ENCODE measurements at regions of chr2 and their contacts with region 1.

Region 1: DNA sequence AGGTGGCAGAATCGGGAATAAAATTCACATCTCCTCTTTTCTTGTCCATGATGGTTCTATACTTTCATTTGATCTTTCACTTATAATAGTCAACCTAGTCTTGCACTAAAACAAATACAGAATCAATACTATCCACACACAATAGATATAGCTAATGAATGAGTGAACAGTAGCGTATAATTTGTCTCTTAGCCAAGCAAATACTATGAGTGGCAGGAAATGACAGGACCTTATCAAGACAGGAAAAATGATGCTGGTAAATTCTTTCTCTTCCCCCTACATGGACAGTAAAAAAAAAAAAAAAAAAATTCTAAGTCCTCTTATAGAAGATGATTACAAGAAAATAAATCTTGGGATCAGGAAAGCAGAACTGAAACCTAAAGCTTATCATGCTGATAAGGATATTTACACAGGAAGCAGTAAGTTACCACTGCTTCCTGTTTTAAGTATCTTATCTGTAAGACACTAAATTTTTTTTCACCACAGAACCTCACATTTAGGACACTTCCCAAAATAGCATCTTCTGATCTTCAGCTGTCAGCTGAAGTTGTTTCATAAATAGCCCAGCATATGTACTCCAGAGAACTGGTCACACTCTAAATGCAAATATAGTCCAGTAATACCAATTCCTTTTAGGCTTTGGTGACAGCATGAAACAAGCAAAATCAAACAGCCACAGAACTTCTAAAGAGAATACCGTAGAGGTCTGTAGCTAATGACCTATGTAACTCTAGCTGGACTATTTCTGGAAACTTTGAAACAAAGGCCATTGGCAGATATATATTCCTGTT is 27.0 kb downstream of the IRS1 start:
- DNase-seq: no peak
- ATAC-seq: peak; percentile 83
- H3K4me3 Mint-ChIP-seq: peak overlapping the region; percentile 76
- H3K27ac Mint-ChIP-seq: peak overlapping the region; percentile 78
- H3K4me1 Mint-ChIP-seq: peaks cover 29% of the 10 kb centered on the region
- H3K27me3 Mint-ChIP-seq: no peaks in the 10 kb centered on the region

Region 2: DNA sequence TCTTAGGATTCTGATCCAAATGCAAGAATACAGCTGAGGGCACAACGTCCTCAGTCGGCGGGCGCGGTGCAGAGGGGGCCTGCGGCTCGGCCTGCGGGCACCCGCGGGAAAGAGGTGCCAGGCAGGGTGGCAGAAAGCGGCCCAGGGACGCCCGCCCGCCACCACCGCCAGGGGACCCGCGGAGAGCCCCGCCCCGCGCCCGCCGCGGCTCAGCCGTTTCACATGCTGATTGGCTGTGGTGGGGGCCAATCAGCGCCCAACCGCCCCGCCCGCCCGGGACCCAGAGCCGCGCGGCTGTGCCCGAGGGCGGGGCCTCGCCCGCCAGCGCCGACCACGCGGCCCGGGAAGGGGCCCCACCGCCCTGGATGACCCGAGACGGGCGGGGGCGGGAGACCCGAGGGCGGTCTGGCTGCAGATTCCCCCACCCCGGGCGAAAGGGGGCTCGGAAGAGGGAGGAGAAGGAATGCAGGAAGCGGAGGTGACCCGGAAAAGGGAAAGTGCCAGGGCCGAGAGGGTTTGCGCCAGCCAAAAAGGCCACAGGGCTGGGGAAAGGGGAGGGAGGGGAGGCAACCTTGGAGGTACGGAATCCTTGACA is 19.0 kb after region 1 on chr2:
- POLR2A ChIA-PET with region 1: interaction called, 13 read pairs
- DNase-seq: peak; percentile 96
- ATAC-seq: peak; percentile 94
- H3K4me3 Mint-ChIP-seq: peak overlapping the region; percentile 78
- H3K27ac Mint-ChIP-seq: peak overlapping the region; percentile 99
- H3K4me1 Mint-ChIP-seq: peaks cover 57% of the 10 kb centered on the region
- H3K27me3 Mint-ChIP-seq: no peaks in the 10 kb centered on the region

Region 3: GRCh38 chr2:226799181-226799975 is 26.8 kb after region 1 on chr2 and contains the start of gene IRS1:
- POLR2A ChIA-PET with region 1: interaction called, 28 read pairs
- DNase-seq: peak; percentile 79
- ATAC-seq: peak; percentile 53
- H3K4me3 Mint-ChIP-seq: peak within 1 kb of the TSS; percentile 89
- H3K27ac Mint-ChIP-seq: peak within 1 kb of the TSS; percentile 84
- H3K4me1 Mint-ChIP-seq: peaks cover 26% of the 10 kb centered on the region
- H3K27me3 Mint-ChIP-seq: peaks cover 5% of the 10 kb centered on the region
- total RNA-seq, gene IRS1: 6.5 to 8.0 TPM